K562 (cell line): ENCODE measurements at regions of chrX and their contacts with region 1.

Region 1: GRCh38 chrX:154397819-154398724 is at the start of gene RPL10:
- DNase-seq: peak; percentile 89 to 98 (median 94)
- ATAC-seq: peak; percentile 69
- H3K4me3 ChIP-seq: peak within 1 kb of the TSS; percentile 76
- H3K27ac ChIP-seq: peak within 1 kb of the TSS; percentile 97
- H3K4me1 ChIP-seq: peaks cover 5 to 18% of the 10 kb centered on the region in 2 experiments; a peak in 3 of 5 replicates
- H3K27me3 ChIP-seq: no peaks in the 10 kb centered on the region
- CTCF ChIP-seq: 0 out of 6 replicates have a peak, but pooled peaks of 1 of the 3 experiments have one; percentile 19
- EP300 ChIP-seq: no peak
- POLR2A ChIP-seq: peak; percentile 100
- RAD21 ChIP-seq: no peak; a peak in 1 of 4 replicates
- polyA plus RNA-seq, gene RPL10: 5,014 to 7,600 TPM

Region 2: DNA sequence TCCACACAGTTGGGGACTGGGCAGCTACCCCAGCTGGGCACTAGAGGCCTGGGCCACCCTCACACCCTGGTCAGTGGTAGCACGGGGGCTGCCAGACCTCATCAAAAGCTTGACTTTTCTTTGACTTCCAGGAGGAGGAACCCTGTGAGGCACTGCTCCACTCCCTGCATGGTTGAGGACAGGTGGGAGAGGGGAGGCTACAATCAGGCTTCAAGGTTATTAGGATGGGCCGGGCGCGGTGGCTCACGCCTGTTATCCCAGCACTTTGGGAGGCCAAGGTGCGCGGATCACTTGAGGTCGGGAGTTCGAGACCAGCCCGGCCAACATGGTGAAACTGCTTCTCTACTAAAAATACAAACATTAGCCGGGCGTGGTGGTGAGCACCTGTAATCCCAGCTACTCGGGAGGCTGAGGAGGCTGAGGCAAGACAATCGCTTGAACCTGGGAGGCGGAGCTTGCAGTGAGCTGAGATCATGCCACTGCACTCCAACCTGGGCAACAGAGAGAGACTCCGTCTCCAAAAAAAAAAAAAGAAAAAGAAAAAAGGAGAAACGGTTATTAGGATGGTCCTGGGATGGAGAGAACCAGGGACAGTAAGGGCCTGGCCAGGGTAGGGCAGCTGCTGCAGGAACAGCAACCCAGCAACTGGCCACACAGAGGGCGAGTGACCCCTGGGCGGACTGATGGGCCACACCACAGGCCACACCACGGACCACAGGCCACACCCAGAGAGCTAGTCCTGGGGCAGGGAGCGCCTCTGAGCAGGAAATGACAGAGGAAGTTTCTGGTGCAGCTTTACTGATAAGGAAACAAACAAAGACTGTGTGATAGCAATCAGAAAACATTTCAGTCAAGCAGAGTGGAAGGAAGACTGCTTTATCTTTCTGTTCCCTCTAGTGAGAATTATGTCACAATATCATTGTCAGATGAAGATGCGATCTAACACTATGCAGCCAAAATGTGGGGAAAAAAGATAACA is 274.5 kb before region 1 on chrX:
- CTCF ChIA-PET with region 1: no interaction called
- POLR2A ChIA-PET with region 1: no interaction called
- in situ Hi-C with region 1: no loop called
- intact Hi-C with region 1: no loop called
- DNase-seq: peak; percentile 71 to 87 (median 76)
- ATAC-seq: peak; percentile 96
- H3K4me3 ChIP-seq: no peak overlapping the region
- H3K27ac ChIP-seq: peak overlapping the region; percentile 50; the same call in 2 of the 3 replicates
- H3K4me1 ChIP-seq: peaks cover 29% of the 10 kb centered on the region in 2 experiments; a peak in 4 of 5 replicates
- H3K27me3 ChIP-seq: no peaks in the 10 kb centered on the region
- CTCF ChIP-seq: no peak
- EP300 ChIP-seq: peak; percentile 94
- POLR2A ChIP-seq: no peak; the same call in 1 of the 2 replicates
- RAD21 ChIP-seq: no peak

Region 3: DNA sequence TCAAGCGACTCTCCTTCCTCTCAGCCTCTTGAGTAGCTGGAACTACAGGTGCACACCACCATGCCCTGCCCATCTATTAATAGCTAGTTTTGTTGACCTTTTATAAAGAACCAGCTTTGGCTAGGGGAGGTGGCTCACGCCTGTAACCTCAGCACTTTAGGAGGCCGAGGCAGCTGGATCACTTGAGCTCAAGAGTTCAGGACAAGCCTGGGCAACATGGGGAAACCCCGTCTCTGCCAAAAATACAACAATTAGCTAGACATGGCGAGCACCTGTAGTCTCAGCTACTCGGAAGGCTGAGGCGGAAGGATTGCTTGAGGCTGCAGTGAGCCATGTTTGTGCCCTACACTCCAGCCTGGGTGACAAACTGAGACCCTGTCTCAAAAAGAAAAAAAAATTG is 99.8 kb before region 1 on chrX:
- CTCF ChIA-PET with region 1: no interaction called
- POLR2A ChIA-PET with region 1: no interaction called
- in situ Hi-C with region 1: no loop called
- intact Hi-C with region 1: no loop called
- DNase-seq: no peak
- ATAC-seq: no peak
- H3K4me3 ChIP-seq: no peak overlapping the region
- H3K27ac ChIP-seq: no peak overlapping the region
- H3K4me1 ChIP-seq: peaks cover 0 to 9% of the 10 kb centered on the region in 2 experiments; a peak in 1 of 5 replicates
- H3K27me3 ChIP-seq: no peaks in the 10 kb centered on the region
- CTCF ChIP-seq: no peak
- EP300 ChIP-seq: no peak
- POLR2A ChIP-seq: no peak
- RAD21 ChIP-seq: no peak

Region 4: GRCh38 chrX:154333837-154334271 is 64.2 kb before region 1 on chrX:
- CTCF ChIA-PET with region 1: no interaction called
- POLR2A ChIA-PET with region 1: interaction called, 4 read pairs
- in situ Hi-C with region 1: loop called (anchors 5 kb)
- intact Hi-C with region 1: no loop called
- DNase-seq: no peak
- ATAC-seq: no peak
- H3K4me3 ChIP-seq: no peak overlapping the region
- H3K27ac ChIP-seq: no peak overlapping the region
- H3K4me1 ChIP-seq: no peaks in the 10 kb centered on the region
- H3K27me3 ChIP-seq: peaks cover 1 to 8% of the 10 kb centered on the region in 2 experiments; a peak in 2 of 5 replicates
- CTCF ChIP-seq: no peak
- EP300 ChIP-seq: no peak
- POLR2A ChIP-seq: no peak
- RAD21 ChIP-seq: no peak

Region 5: DNA sequence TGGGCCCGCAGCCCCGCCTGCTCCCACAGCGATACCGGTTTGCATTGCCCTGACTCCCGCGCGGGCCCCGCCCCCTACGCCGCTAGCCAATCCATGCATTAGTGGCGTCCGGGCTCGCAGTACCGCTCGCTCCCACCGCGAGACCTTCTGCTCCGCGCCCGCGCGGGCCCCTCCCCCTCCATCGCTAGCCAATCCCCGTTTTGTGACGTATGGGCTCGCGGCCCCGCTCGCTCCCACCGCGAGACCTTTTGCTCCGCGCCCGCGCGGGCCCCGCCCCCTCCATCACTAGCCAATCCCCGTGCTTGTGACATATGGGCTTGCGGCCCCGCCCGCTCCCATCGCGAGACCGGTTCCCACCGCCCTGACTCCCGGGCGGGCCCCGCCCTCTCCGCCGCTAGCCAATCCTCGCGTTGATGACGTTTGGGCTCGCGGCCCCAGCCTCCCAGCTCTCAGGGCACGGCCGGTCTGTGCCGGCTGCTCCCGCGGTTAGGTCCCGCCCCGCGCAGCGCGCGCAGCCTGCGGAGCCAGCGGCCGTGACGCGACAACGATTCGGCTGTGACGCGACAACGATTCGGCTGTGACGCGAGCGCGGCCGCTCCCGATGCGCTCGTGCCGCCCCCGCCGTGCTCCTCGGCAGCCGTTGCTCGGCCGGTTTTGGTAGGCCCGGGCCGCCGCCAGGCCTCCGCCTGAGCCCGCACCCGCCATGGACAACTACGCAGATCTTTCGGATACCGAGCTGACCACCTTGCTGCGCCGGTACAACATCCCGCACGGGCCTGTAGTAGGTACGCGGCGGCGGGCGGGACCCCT is 19.1 kb before region 1 on chrX and contains the start of gene EMD:
- CTCF ChIA-PET with region 1: no interaction called
- POLR2A ChIA-PET with region 1: interaction called, 12 read pairs
- in situ Hi-C with region 1: no loop called
- intact Hi-C with region 1: no loop called
- DNase-seq: peak; percentile 80 to 98 (median 88)
- ATAC-seq: peak; percentile 92
- H3K4me3 ChIP-seq: peak within 1 kb of the TSS; percentile 91
- H3K27ac ChIP-seq: peak within 1 kb of the TSS; percentile 96
- H3K4me1 ChIP-seq: peaks cover 16 to 57% of the 10 kb centered on the region in 2 experiments
- H3K27me3 ChIP-seq: no peaks in the 10 kb centered on the region
- CTCF ChIP-seq: no peak; a peak in 1 of 6 replicates
- EP300 ChIP-seq: peak; percentile 21; the same call in 1 of the 2 replicates
- POLR2A ChIP-seq: peak; percentile 79
- RAD21 ChIP-seq: no peak
- polyA plus RNA-seq, gene EMD: 2.3 to 3.1 TPM

Region 6: DNA sequence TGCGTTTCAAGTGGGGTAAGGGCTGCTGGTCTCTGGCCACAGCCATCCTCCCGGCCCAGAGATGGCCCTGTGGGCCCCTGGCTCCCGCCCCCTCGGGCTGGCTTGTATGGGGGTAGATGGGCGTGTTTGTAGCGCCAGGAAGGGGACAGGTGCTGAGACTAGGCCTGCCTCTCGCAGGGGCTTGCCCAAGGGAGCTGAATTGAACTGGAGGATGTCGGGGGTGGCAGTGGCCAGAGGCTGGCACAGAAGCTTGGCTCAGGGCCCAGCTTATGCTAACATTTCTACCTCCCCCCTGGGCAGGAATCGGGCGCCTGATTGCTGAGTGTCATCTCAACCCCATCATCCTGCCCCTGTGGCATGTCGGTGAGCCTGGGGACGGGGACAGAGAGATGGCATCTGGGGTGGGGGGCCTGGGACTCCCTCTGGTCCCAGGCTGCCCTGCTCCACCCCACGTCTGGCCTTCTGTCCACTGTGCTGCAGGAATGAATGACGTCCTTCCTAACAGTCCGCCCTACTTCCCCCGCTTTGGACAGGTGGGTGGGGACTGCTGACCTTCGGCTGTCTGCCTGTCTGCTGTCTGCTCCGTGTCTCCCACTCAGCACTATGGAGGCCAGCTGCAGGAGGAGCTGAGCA is 21.8 kb after region 1 on chrX:
- CTCF ChIA-PET with region 1: no interaction called
- POLR2A ChIA-PET with region 1: interaction called, 11 read pairs
- in situ Hi-C with region 1: no loop called
- intact Hi-C with region 1: no loop called
- DNase-seq: no peak
- ATAC-seq: peak; percentile 37; the same call in 2 of the 3 replicates
- H3K4me3 ChIP-seq: no peak overlapping the region
- H3K27ac ChIP-seq: no peak overlapping the region
- H3K4me1 ChIP-seq: peaks cover 0 to 20% of the 10 kb centered on the region in 2 experiments; a peak in 2 of 5 replicates
- H3K27me3 ChIP-seq: no peaks in the 10 kb centered on the region
- CTCF ChIP-seq: no peak
- EP300 ChIP-seq: no peak
- POLR2A ChIP-seq: no peak
- RAD21 ChIP-seq: no peak

Region 7: GRCh38 chrX:154490414-154491083 is 92.5 kb after region 1 on chrX and contains the start of gene SLC10A3:
- CTCF ChIA-PET with region 1: no interaction called
- POLR2A ChIA-PET with region 1: interaction called, 10 read pairs
- in situ Hi-C with region 1: no loop called
- intact Hi-C with region 1: loop called (anchors 5 kb)
- DNase-seq: peak; percentile 87 to 96 (median 90)
- ATAC-seq: peak; percentile 85
- H3K4me3 ChIP-seq: peak within 1 kb of the TSS; percentile 72
- H3K27ac ChIP-seq: peak within 1 kb of the TSS; percentile 87
- H3K4me1 ChIP-seq: peaks cover 36 to 73% of the 10 kb centered on the region in 2 experiments; a peak in 4 of 5 replicates
- H3K27me3 ChIP-seq: no peaks in the 10 kb centered on the region
- CTCF ChIP-seq: peak in 2 of 3 experiments; percentile 21 to 42; a peak in 2 of 6 replicates
- EP300 ChIP-seq: no peak
- POLR2A ChIP-seq: peak; percentile 78
- RAD21 ChIP-seq: peak in 1 of 2 experiments; percentile 11; a peak in 2 of 4 replicates
- polyA plus RNA-seq, gene SLC10A3: 5.2 to 6.0 TPM

Region 8: GRCh38 chrX:154541724-154542467 is 143.8 kb after region 1 on chrX:
- CTCF ChIA-PET with region 1: interaction called, 3 read pairs
- POLR2A ChIA-PET with region 1: interaction called, 12 read pairs
- in situ Hi-C with region 1: loop called (anchors 10 kb)
- intact Hi-C with region 1: no loop called
- DNase-seq: peak; percentile 83 to 96 (median 88)
- ATAC-seq: peak; percentile 83
- H3K4me3 ChIP-seq: peak overlapping the region; percentile 33
- H3K27ac ChIP-seq: peak overlapping the region; percentile 94
- H3K4me1 ChIP-seq: peaks cover 40 to 56% of the 10 kb centered on the region in 2 experiments
- H3K27me3 ChIP-seq: no peaks in the 10 kb centered on the region
- CTCF ChIP-seq: no peak
- EP300 ChIP-seq: peak; percentile 89
- POLR2A ChIP-seq: peak; percentile 57
- RAD21 ChIP-seq: no peak